PC-3 (cell line): ENCODE measurements at regions of chr7 and their contacts with region 1.

Region 1: DNA sequence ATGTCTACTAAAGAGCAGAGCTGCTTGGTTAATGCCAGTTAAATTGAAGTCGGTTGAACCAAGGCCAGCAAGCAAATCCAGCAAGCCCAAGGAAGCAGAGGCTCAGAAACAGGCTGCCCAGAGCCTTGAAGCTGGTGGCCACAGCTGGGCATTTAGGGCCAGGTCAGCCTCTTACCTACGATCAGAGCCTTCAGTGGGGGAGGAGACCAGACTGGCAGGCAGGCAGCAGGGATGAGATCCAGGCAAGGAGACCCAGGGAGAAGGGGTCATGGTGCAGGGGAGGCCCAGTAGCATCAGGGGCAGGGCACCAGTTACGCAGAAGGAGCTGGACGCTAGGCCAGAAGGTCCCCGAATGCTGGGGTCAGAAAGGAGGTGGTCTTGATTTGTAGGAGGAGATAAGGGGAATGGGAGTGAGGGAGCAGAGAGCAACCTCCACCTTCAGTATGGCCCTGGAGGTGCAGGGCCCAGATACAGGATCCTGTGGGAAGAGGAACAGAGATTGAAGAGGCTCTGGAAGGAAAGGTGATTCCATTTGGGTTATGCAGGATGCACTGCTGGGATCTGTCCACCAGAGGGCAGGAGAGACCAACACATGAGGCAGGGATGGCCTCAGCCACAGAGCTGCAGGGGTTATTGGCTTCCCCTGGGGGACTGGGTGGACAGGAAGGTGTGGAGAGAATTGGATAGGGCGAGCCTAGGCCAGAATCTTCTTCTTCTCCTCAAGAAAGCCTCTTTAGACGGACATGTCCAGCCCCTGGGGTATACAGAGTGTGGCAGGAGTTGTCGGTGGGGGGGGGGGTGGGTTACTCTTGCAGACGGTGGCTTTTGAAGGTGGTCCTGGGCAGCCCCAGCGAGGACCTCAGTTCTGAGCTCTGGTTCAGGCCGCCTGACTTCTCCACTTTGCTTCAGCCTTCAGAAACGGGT is 132.6 kb upstream of the PODXL start:
- DNase-seq: peak; percentile 73
- ATAC-seq: peak; percentile 74
- H3K4me3 ChIP-seq: no peak overlapping the region
- H3K27ac ChIP-seq: no peak overlapping the region
- H3K4me1 ChIP-seq: no peaks in the 10 kb centered on the region
- H3K27me3 ChIP-seq: peaks cover 41% of the 10 kb centered on the region
- CTCF ChIP-seq: peak; percentile 93

Region 2: DNA sequence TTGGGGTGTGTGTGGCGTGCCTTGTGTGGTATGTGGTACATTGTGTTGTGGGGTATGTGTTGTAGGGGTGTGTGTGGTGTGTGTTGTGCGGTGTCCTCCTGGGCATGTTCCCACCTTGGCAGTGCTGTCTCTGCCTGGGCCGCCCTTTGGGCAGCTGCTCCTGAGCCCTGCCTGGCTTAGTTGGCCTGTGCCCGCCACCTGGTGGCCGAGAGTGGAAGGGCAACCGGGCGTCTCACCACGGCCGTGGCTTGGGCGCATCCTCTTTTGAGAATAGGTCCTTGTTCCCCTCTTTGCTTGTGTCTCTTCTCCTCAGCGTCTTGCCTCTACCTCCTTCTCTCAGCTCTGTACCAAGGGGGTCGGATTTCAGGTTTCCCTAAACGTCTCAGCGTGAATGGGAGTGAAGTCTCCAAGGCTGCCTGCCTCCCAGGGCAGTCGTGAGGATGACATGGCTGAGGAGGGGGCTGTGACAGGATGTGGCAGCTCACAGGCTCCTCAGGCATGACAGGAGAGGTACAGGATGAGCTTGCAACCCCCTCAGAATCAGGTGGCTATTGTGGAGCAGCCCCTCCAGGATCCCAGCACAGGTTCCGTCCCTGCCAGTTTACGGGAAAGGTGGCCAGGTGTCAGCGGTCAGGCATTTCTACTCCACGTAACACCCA is 34.2 kb before region 1 on chr7:
- CTCF ChIA-PET with region 1: no interaction called
- POLR2A ChIA-PET with region 1: no interaction called
- intact Hi-C with region 1: no loop called
- DNase-seq: peak; percentile 83
- ATAC-seq: peak; percentile 95
- H3K4me3 ChIP-seq: no peak overlapping the region
- H3K27ac ChIP-seq: no peak overlapping the region
- H3K4me1 ChIP-seq: peaks cover 10% of the 10 kb centered on the region; the same call in 1 of the 2 replicates
- H3K27me3 ChIP-seq: no peaks in the 10 kb centered on the region
- CTCF ChIP-seq: peak; percentile 85

Region 3: GRCh38 chr7:131829947-131830558 is 141.1 kb after region 1 on chr7:
- CTCF ChIA-PET with region 1: interaction called, 12 read pairs
- POLR2A ChIA-PET with region 1: no interaction called
- intact Hi-C with region 1: no loop called
- DNase-seq: no peak
- ATAC-seq: no peak
- H3K4me3 ChIP-seq: no peak overlapping the region
- H3K27ac ChIP-seq: no peak overlapping the region
- H3K4me1 ChIP-seq: no peaks in the 10 kb centered on the region
- H3K27me3 ChIP-seq: peaks cover 63% of the 10 kb centered on the region
- CTCF ChIP-seq: no peak

Region 4: GRCh38 chr7:131859147-131859821 is 170.3 kb after region 1 on chr7:
- CTCF ChIA-PET with region 1: interaction called, 4 read pairs
- POLR2A ChIA-PET with region 1: no interaction called
- intact Hi-C with region 1: loop called (anchors 10 kb)
- DNase-seq: peak; percentile 77
- ATAC-seq: peak; percentile 95
- H3K4me3 ChIP-seq: peak overlapping the region; percentile 22; the same call in 1 of the 2 replicates
- H3K27ac ChIP-seq: no peak overlapping the region
- H3K4me1 ChIP-seq: peaks cover 10% of the 10 kb centered on the region
- H3K27me3 ChIP-seq: no peaks in the 10 kb centered on the region
- CTCF ChIP-seq: peak; percentile 87

Region 5: DNA sequence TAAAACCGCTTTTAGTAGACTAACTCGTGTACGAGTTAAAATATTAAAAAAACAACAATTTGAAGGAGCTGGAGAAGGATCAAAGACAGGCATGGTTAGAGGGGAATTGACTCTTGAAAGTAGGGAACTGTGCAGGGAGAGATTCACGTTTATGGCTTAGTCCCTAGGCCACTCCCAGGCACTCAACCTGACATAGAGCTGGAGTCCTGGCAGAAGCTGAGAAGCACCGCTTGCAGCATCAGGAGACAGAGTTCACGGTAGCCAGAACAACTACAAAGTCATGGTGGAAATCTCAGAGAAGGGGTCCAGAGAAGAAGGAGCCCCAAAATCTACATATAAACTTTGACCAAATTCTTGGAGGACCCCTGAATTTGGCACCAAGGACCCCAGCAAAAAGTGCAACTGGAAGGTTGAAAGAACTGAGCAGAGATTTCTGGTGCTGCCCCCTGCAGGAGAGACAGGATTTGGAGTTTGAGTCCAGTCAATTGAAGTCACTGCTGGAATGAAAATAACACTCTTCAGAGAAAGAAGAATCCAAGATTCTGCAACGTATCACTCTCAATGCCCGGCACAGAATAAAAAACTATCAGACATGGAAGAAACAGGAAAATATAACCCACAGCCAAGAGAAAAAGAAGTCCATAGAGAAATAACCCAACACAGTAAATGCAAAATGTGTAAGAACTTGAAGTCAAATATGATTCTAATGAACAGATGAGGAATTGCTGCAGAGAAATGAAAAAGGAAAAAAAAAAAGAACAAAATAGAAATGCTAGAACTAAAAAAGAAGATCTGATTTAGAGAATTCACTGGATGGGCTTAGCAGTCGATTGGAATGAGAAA is 360.7 kb after region 1 on chr7:
- CTCF ChIA-PET with region 1: no interaction called
- POLR2A ChIA-PET with region 1: no interaction called
- intact Hi-C with region 1: loop called (anchors 1 kb)
- DNase-seq: peak; percentile 58
- ATAC-seq: no peak
- H3K4me3 ChIP-seq: no peak overlapping the region
- H3K27ac ChIP-seq: no peak overlapping the region
- H3K4me1 ChIP-seq: no peaks in the 10 kb centered on the region
- H3K27me3 ChIP-seq: no peaks in the 10 kb centered on the region
- CTCF ChIP-seq: peak; percentile 84

Region 6: DNA sequence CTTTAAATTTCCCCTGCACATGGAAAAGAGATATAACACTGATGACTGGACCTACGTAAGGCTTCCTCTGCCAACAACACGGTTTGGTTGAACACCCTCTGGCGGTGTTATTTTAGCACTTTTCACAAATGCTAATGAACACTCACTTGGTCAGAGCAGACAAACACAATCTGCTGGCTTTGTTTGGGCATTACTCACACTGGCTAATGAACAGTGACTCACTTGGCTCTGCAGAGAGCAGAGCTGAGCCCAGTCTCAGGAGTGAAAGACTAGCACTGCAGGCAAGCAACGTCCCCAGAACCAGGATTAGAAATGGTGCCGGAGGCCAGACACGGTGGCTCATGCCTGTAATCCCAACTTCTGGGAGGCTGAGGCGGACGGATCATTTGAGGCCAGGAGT is 456.5 kb after region 1 on chr7:
- CTCF ChIA-PET with region 1: no interaction called
- POLR2A ChIA-PET with region 1: no interaction called
- intact Hi-C with region 1: loop called (anchors 5 kb)
- DNase-seq: peak; percentile 88
- ATAC-seq: peak; percentile 100
- H3K4me3 ChIP-seq: no peak overlapping the region
- H3K27ac ChIP-seq: no peak overlapping the region
- H3K4me1 ChIP-seq: peaks cover 14% of the 10 kb centered on the region
- H3K27me3 ChIP-seq: no peaks in the 10 kb centered on the region
- CTCF ChIP-seq: no peak; the same call in none of the 2 replicates

Region 7: GRCh38 chr7:132580717-132581285 is 891.8 kb after region 1 on chr7:
- CTCF ChIA-PET with region 1: interaction called, 4 read pairs
- POLR2A ChIA-PET with region 1: no interaction called
- intact Hi-C with region 1: loop called (anchors 1 kb)
- DNase-seq: peak; percentile 71
- ATAC-seq: peak; percentile 77
- H3K4me3 ChIP-seq: no peak overlapping the region
- H3K27ac ChIP-seq: no peak overlapping the region
- H3K4me1 ChIP-seq: peaks cover 4% of the 10 kb centered on the region; the same call in 1 of the 2 replicates
- H3K27me3 ChIP-seq: peaks cover 20% of the 10 kb centered on the region
- CTCF ChIP-seq: peak; percentile 87